Activated CD4-positive, alpha-beta T cell treated with anti-CD3 and anti-CD28 coated beads for 36 hours (primary cell): ENCODE measurements at regions of chr10 and their contacts with region 1.

Region 1: GRCh38 chr10:49080071-49080470 is 35.3 kb downstream of the VSTM4 start:
- DNase-seq: peak; percentile 13
- ATAC-seq: peak; percentile 47
- H3K4me3 Mint-ChIP-seq: no peak overlapping the region
- H3K27ac Mint-ChIP-seq: no peak overlapping the region
- H3K4me1 Mint-ChIP-seq: peaks cover 23% of the 10 kb centered on the region
- H3K27me3 Mint-ChIP-seq: peaks cover 6% of the 10 kb centered on the region

Region 2: GRCh38 chr10:48266528-48266927 is 813.5 kb before region 1 on chr10:
- CTCF ChIA-PET with region 1: no interaction called
- POLR2A ChIA-PET with region 1: no interaction called
- intact Hi-C with region 1: no loop called
- DNase-seq: peak; percentile 33
- ATAC-seq: peak; percentile 80
- H3K4me3 Mint-ChIP-seq: no peak overlapping the region
- H3K27ac Mint-ChIP-seq: no peak overlapping the region
- H3K4me1 Mint-ChIP-seq: peaks cover 2% of the 10 kb centered on the region
- H3K27me3 Mint-ChIP-seq: peaks cover 9% of the 10 kb centered on the region

Region 3: DNA sequence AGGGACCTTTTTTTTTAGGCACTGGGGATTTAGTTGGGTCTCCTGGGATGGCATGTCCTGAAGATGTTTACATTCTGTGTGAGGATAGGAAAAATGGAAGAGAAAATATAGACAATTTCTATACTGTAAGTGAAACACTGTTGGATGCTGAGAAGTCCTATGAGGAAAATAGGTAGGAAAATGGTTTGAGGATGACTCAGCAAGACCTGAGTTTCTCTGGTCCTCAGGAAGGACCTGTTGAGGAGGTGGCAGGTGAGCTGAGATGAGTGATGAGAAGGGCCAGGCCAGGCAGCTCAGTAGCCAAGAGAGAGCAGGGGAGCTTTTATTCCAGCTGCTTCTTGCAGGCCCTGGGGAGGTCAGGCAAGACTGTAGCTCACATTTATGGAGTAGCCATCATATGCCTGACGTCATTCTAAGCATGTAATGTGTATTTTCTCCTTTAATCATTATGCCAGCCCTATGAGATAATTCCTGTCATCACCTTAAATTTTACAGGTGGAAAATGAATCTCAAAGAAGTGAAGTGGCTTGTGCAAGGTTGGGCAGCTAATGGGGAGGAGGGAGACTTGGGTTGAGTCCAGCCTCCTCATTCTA is 121.4 kb before region 1 on chr10:
- CTCF ChIA-PET with region 1: no interaction called
- POLR2A ChIA-PET with region 1: no interaction called
- intact Hi-C with region 1: no loop called
- DNase-seq: no peak
- ATAC-seq: no peak
- H3K4me3 Mint-ChIP-seq: no peak overlapping the region
- H3K27ac Mint-ChIP-seq: no peak overlapping the region
- H3K4me1 Mint-ChIP-seq: no peaks in the 10 kb centered on the region
- H3K27me3 Mint-ChIP-seq: no peaks in the 10 kb centered on the region

Region 4: DNA sequence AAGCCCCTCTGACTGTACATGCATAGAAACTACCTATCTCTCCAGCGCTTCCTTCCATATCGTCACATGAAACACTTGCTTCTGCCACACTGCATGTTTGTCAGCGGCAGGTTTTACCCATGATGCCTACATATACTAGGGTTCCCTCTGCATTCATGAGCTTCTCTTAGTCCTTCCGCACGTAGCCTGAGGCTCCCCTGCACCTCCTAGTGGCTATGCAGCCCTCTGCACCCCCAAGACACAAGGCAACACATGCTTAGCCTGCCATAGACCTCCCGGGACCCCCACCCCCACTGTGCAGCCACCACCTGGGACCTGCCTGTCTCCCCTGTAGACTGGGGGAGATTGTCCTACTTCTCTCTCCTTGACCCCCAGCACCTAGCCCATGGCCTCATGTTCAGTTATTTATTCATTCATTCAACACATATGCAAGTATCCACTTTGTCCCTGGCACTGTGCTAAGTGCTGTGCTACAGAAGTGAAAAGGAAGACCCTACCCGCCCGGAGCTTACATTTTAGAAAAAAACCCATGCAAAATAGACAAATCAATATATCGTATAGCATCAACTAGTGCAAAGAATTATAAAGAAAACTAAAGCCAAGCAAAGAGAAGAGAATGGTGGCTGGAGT is 84.6 kb after region 1 on chr10:
- CTCF ChIA-PET with region 1: no interaction called
- POLR2A ChIA-PET with region 1: no interaction called
- intact Hi-C with region 1: loop called in 1 of 2 experiments (anchors 5 kb)
- DNase-seq: peak; percentile 73
- ATAC-seq: peak; percentile 93
- H3K4me3 Mint-ChIP-seq: no peak overlapping the region
- H3K27ac Mint-ChIP-seq: peak overlapping the region; percentile 10
- H3K4me1 Mint-ChIP-seq: peaks cover 13% of the 10 kb centered on the region
- H3K27me3 Mint-ChIP-seq: no peaks in the 10 kb centered on the region